WTC11 (cell line): ENCODE measurements at regions of chr2 and their contacts with region 1.

Region 1: GRCh38 chr2:24792874-24793760 is at the starts of genes CENPO and PTRHD1:
- DNase-seq: peak; percentile 95
- ATAC-seq: peak; percentile 90
- H3K4me3 Mint-ChIP-seq: peak within 1 kb of the TSS; percentile 97
- H3K27ac Mint-ChIP-seq: peak within 1 kb of the TSS; percentile 99
- H3K4me1 Mint-ChIP-seq: peaks cover 45% of the 10 kb centered on the region
- H3K27me3 Mint-ChIP-seq: 0 out of 2 replicates have a peak, but pooled peaks cover 2% of the 10 kb centered on the region
- CTCF ChIP-seq: no peak
- total RNA-seq, gene CENPO: 35.2 to 38.6 TPM (median 35.2 TPM) in 3 replicates
- total RNA-seq, gene PTRHD1: 37.6 to 43.4 TPM (median 39.2 TPM) in 3 replicates

Region 2: DNA sequence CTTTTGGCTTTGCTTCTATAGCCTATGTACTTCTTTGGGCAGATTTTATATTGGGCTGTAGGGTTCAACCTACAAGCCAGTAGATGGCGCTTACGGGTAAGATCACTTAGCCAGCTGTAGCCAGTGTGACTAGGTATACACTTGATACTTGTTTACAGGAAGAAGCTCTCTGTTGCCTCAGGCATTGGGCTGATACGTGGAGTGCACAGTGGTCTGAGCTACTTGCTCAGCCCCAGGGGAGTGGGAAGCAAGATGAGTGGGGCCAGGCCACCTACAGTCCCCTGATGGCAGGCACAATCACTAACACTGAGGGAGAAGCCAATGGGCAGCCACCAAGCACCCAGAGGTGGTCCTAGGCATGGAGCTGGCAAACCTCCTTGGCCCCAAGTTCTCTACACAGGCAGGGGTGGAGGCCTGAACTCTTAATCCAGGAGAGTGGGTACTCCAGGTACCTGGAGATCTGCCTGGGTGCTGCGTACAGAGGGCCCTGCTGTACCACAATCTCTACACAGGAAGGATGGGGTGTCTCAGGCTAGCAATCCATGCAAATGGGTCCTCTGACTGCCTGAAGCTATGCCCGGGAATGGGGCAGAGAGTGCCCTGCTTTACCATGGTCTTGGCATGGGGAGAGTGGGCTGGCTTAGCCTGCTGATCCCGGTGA is 179.8 kb before region 1 on chr2:
- CTCF ChIA-PET with region 1: interaction called, 27 read pairs
- POLR2A ChIA-PET with region 1: interaction called, 5 read pairs
- DNase-seq: peak; percentile 46
- ATAC-seq: peak; percentile 93
- H3K4me3 Mint-ChIP-seq: no peak overlapping the region
- H3K27ac Mint-ChIP-seq: peak overlapping the region; percentile 97
- H3K4me1 Mint-ChIP-seq: peaks cover 33% of the 10 kb centered on the region
- H3K27me3 Mint-ChIP-seq: no peaks in the 10 kb centered on the region
- CTCF ChIP-seq: peak; percentile 56; the same call in 1 of the 2 replicates

Region 3: DNA sequence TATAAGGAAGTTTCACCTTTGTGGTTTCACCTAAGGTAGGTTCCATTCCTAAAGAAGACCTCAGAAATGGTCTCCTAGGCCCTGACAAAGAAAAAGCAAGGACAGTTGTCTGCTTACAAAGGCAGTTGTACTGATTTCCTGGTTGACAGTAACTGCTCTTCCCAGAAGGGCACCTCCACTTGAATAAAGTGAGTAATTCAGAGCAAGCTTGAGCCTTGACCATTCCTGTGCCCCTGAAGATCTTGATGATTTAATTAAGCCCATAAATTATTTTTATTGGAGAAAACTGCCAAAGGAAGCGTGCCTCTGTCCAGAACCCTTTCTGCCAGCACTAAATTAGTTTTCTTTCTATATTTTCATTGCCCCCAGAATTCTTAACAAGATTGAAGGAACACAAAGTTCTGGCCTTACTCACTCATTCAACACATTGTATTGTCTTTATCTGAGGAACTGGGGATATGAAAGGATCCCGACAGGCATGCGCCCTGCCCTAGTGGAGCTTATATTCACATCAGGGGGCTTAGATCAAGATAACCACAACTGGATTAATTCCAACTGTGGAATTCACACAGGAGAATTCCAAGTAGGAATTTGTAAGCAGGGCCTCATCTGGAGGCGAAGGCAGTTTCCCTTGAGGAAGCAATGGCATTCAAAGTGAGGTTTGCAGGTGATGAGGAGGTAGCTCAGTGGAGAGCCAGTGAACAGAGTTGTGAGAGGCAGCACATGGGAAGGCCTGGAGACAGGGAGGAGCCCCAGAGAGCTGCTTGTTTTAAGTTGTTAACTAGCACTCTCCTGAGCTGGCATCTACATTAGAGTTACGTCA is 21.1 kb before region 1 on chr2:
- CTCF ChIA-PET with region 1: interaction called, 10 read pairs
- POLR2A ChIA-PET with region 1: no interaction called
- DNase-seq: no peak
- ATAC-seq: peak; percentile 50
- H3K4me3 Mint-ChIP-seq: no peak overlapping the region
- H3K27ac Mint-ChIP-seq: peak overlapping the region; percentile 44
- H3K4me1 Mint-ChIP-seq: peaks cover 14% of the 10 kb centered on the region
- H3K27me3 Mint-ChIP-seq: no peaks in the 10 kb centered on the region
- CTCF ChIP-seq: no peak